ENCODE measurements at regions of chr6 and their contacts with region 1.

Region 1: GRCh38 chr6:125363039-125363823 is 61.5 kb upstream of the HDDC2 start:
- DNase-seq: peak; percentile 82 to 90 (median 88)
- ATAC-seq: peak; percentile 83 to 89 (median 86)
- H3K4me3 ChIP-seq: peak overlapping the region; percentile 26 to 62 (median 54)
- H3K27ac ChIP-seq: peak overlapping the region; percentile 39 to 94 (median 86)
- H3K4me1 ChIP-seq: peaks cover 0 to 36% (median 16%) of the 10 kb centered on the region in 12 donors
- H3K27me3 ChIP-seq: peaks cover 0 to 26% (median 0%) of the 10 kb centered on the region in 9 donors
- CTCF ChIP-seq: no peak
- POLR2A ChIP-seq: no peak

Region 2: GRCh38 chr6:124703541-124703940 is 659.7 kb before region 1 on chr6:
- intact Hi-C with region 1: no loop called
- DNase-seq: no peak
- ATAC-seq: no peak
- H3K4me3 ChIP-seq: no peak overlapping the region
- H3K27ac ChIP-seq: no peak overlapping the region
- H3K4me1 ChIP-seq: no peaks in the 10 kb centered on the region
- H3K27me3 ChIP-seq: no peaks in the 10 kb centered on the region
- CTCF ChIP-seq: no peak
- POLR2A ChIP-seq: no peak

Region 3: GRCh38 chr6:125340991-125341390 is 22.2 kb before region 1 on chr6:
- intact Hi-C with region 1: loop called in 1 of 10 experiments (anchors 2 kb)
- DNase-seq: no peak
- ATAC-seq: no peak
- H3K4me3 ChIP-seq: no peak overlapping the region
- H3K27ac ChIP-seq: peak overlapping the region in 10 of 12 donors; percentile 3 to 86 (median 56)
- H3K4me1 ChIP-seq: peaks cover 0 to 24% (median 5%) of the 10 kb centered on the region in 12 donors
- H3K27me3 ChIP-seq: no peaks in the 10 kb centered on the region
- CTCF ChIP-seq: no peak
- POLR2A ChIP-seq: no peak

Region 4: DNA sequence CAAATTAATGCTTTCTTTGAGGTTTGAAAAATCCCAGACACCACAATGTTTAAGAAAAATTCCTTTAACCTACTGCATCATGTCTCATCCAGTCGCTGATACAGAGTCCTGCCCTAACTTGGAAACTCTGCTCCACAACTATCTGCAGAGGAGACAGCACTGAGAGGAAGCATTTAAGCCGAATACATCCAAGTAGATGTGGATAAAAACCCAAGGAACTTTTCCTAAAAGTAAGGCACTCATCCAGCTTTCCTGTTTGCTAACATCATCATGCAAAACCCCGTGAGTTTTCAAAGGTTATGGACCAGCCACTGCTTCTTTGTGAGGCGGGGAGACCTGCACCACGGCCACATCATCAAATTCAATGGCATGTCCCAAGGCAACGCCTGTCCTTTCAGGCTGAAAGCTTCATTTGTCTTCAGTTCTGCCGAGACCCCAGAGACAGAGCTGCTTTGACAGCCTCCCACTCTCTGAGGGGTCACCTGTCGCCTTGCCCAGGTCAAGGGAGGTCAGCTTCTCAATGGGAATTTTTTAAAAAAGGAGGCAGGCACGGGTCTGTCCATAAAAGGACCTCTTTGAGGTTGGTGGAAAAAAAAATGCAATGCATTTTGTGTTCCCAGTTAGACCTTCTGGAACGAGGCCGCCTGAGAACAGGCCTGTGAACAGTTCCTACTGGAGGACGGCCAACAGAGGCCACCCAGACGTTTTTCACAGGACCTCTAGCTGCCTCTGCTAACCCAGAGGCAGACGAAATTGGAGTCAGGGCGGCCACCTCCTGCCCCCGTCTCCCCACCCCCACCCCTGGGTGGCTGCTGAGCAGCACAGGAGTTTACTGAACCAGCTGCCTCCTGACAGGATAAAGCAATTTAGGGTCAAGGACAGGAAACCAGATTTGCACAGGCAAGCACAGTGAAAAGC is 81.0 kb after region 1 on chr6:
- intact Hi-C with region 1: loop called in 1 of 10 experiments (anchors 5 kb)
- DNase-seq: peak; percentile 74 to 84 (median 81)
- ATAC-seq: peak; percentile 82 to 94 (median 86)
- H3K4me3 ChIP-seq: peak overlapping the region in 1 of 12 donors; percentile 26
- H3K27ac ChIP-seq: peak overlapping the region; percentile 18 to 78 (median 52)
- H3K4me1 ChIP-seq: peaks cover 0 to 15% (median 4%) of the 10 kb centered on the region in 12 donors
- H3K27me3 ChIP-seq: no peaks in the 10 kb centered on the region
- CTCF ChIP-seq: no peak
- POLR2A ChIP-seq: no peak

Region 5: DNA sequence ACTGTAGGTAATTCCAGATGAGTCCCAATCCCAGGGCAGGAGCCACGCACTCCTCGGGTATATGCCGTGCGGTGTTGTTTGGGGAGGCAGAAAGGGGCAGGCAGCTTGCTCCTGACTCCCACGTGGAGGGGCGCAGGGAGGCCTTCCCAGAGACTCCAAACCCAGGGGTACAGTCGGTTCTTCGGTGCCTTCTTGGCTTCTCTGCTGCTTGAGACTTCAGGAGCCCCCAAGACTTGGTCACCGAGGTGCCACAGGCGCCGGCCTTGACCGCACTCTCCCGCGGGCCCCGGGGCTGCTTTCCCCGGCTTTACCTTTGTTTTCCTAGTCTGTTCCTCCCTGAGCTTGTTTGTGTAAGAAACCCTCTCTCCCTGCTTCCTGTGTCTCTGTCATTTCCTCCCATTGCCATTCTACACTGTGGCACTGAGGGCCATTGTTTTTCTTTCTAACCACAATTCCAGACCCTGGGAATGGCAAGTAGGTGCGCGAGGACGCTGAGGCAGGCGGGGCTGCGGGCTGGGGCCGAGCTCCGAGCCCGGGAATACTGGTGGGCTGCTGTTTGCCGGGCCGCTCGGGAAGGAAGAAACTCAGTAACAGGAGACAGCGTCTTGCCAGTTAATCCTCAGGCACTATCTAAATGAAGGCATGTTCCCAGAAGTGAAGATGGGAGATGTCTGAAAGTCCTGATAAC is 170.6 kb after region 1 on chr6:
- intact Hi-C with region 1: loop called in 1 of 10 experiments (anchors 10 kb)
- DNase-seq: no peak
- ATAC-seq: no peak
- H3K4me3 ChIP-seq: peak overlapping the region in 2 of 12 donors; percentile 10 to 12
- H3K27ac ChIP-seq: no peak overlapping the region
- H3K4me1 ChIP-seq: peaks cover 0 to 29% (median 0%) of the 10 kb centered on the region in 12 donors
- H3K27me3 ChIP-seq: peaks cover 0 to 17% (median 0%) of the 10 kb centered on the region in 9 donors
- CTCF ChIP-seq: no peak
- POLR2A ChIP-seq: no peak

Region 6: GRCh38 chr6:125584468-125585029 is 221.3 kb after region 1 on chr6:
- intact Hi-C with region 1: loop called in 1 of 10 experiments (anchors 10 kb)
- DNase-seq: peak; percentile 61 to 84 (median 74)
- ATAC-seq: peak; percentile 93 to 96 (median 94)
- H3K4me3 ChIP-seq: no peak overlapping the region
- H3K27ac ChIP-seq: peak overlapping the region in 11 of 12 donors; percentile 31 to 82 (median 65)
- H3K4me1 ChIP-seq: peaks cover 0 to 26% (median 3%) of the 10 kb centered on the region in 12 donors
- H3K27me3 ChIP-seq: no peaks in the 10 kb centered on the region
- CTCF ChIP-seq: peak in 7 of 12 donors; percentile 19 to 55 (median 33)
- POLR2A ChIP-seq: peak in 1 of 2 donors; percentile 17